Left cardiac atrium (tissue), 4 donors: ENCODE measurements at regions of chr19 and their contacts with region 1.

Region 1: GRCh38 chr19:12294249-12295158 is at the start of gene ZNF44:
- DNase-seq: peak; percentile 98
- ATAC-seq: peak; percentile 99
- total RNA-seq, gene ZNF44: 7.4 to 11.5 TPM

Region 2: GRCh38 chr19:12224676-12225075 is 69.8 kb before region 1 on chr19:
- intact Hi-C with region 1: no loop called
- DNase-seq: no peak
- ATAC-seq: no peak

Region 3: DNA sequence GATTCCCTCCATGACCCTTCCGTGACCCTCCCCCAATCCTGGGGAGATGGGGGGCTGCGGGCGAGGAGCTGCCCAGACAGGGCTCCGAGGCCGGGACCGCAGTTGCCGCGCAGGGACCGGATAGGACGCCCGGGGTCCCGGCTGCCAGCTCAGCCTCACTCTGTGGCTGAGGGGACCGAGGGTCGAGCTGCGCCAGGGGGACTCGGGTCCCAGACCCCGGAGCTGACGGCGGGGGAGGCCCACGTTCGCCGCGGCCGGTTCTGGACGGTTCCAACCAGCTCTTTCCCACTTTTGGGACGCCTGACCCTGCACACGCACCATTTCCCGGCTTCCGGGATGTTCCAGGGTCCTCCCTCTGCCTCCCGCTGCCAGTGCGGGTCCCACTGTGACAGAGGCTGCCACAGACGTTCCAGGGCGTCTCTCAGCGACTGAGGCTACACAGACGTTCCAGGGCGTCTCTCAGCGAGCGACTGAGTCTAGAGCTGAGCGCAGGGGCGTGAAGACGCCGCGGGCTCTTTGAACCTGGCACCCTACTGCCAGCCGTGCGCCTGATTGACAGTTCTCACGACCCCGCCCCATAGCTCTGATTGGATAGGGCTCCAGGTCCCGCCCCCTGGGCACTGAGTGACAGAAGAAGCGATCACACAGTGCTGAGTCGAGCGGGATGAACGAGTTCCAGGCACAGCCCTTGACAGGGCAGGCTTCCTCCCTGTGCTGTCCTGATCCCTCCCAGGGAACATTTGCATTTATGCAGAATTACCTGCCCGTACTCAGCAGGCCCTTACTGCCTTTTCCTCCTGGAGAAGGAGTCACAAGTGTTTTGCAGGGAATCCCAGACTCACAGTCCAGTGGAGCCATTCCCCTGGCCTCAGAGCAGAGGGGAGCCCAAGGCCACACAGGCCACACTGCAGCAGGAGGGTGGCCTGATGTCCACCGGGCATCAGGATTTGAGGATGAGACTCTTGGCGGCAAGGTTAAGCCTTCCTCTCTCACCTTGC is 39.0 kb after region 1 on chr19 and contains the start of gene ZNF563:
- intact Hi-C with region 1: loop called in 1 of 2 experiments (anchors 5 kb)
- DNase-seq: peak; percentile 99
- ATAC-seq: peak; percentile 99 to 100
- total RNA-seq, gene ZNF563: 3.8 to 6.3 TPM

Region 4: DNA sequence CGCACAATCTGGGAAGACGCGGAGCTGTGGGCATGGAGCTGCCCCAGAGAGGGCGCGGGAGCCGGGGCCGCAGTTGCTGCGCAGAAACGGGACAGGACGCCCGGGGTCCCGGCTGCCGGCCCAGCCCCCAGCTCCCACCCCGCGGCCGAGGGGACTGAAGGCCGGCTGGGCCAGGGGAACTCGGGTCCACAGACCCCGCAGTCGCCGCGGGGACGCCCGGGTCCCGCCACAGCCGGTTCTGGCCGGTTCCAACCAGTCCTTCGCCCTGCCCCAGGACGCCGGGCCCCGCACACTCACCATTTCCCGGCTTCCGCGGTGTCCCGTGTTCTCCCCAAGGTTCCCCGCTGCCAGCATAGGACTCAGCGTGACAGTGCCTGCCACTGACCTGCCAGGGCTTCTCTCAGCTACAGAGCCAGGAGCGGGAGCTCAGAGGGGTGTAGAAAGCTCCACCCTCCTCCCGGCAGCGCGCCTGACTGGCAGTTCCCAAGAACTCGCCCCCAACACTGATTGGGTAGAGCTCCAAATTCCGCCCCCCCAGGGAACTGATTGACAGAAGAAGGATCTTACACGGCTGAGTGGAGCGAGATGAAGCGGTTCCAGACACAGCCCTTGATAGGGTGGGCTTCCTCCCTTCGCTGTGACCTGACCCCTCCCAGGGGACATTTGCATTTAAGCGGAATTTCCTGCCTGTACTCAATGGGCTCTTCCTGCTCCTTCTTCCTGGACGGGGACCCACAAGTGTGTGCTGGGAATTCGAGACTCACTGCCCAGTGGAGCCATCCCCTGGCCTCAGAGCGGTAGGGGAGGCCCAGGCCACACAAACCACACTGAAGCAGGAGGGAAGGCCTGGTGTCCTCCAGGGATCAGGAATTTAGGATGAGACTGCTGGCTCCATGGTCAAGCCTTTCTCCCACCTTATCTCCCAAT is 71.0 kb after region 1 on chr19 and contains the start of gene ZNF442:
- intact Hi-C with region 1: loop called in 1 of 2 experiments (anchors 2 kb)
- DNase-seq: peak; percentile 98
- ATAC-seq: peak; percentile 98 to 100
- total RNA-seq, gene ZNF442: 2.9 to 4.3 TPM